Activated CD4-positive, alpha-beta T cell treated with anti-CD3 and anti-CD28 coated beads for 36 hours (primary cell): ENCODE measurements at regions of chr5 and their contacts with region 1.

Region 1: DNA sequence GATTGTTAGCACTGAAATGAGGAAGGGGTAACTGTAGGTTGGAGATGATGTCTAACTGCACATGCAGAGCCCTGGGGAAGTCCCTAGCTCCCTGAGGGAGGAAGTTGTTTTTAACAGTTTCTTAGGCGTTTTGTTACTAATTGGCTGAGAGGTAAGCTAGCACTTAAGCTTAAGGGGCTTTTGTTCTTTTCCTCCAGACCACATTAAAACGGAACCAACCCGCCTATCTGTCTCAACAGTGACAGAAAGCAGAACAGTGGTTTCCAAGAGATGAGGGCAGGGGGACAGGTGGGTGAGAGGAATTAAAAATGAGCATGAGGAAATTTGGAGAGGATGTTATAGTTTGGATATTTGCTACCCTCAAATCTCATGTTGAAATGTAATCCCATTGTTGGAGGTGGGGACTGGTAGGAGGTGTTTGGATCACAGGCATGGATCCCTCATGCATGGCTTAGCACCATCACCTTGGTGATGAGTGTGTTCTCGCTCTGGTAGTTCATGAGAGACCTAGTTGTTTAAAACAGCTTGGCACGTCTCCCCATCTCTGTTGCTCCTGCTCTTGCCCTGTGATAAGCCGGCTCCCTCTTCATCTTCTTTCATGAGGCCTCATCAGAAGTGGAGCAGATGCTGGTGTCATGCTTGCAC is 38.9 kb downstream of the LYRM7 start:
- DNase-seq: peak; percentile 66
- ATAC-seq: peak; percentile 95
- H3K4me3 Mint-ChIP-seq: peak overlapping the region; percentile 70
- H3K27ac Mint-ChIP-seq: peak overlapping the region; percentile 96
- H3K4me1 Mint-ChIP-seq: peaks cover 48% of the 10 kb centered on the region
- H3K27me3 Mint-ChIP-seq: no peaks in the 10 kb centered on the region

Region 2: DNA sequence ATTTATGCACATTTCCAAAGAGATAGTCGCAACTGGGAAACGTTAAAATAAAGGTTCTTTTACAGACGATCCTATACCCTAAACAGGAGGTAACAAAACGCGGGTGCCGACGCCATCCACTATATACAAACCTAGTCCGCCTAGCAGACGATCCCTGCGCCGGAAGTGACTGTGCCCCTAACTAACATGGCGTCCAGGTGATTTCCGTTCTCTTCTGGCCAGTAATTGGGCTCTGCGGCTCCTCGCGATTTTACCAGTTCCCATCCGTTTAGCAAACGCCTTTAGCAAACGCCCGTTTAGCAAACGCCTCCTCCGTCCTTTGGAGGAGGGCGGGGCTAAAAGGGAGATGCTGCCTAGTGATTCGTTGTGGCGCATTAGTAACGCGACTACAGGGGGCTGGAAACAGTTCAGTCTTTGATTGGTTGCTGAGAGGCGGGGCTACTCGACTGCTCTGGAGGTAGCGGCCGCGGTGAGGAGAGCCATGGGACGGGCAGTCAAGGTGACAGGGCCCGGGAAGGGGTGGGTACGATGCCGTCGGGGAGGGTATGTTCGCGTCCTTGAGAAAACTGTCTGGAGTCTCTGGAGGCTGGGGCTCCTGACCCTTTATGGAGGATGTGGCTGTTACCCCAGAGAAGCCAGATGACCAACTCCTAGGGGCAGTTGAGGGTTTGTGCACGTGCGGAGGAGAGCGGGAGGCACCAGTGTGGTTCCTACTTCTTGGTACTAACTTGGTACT is 38.9 kb before region 1 on chr5 and contains the start of gene LYRM7:
- CTCF ChIA-PET with region 1: no interaction called
- POLR2A ChIA-PET with region 1: no interaction called
- intact Hi-C with region 1: loop called (anchors 2 kb)
- DNase-seq: peak; percentile 97
- ATAC-seq: peak; percentile 96
- H3K4me3 Mint-ChIP-seq: peak within 1 kb of the TSS; percentile 95
- H3K27ac Mint-ChIP-seq: peak within 1 kb of the TSS; percentile 93
- H3K4me1 Mint-ChIP-seq: peaks cover 34% of the 10 kb centered on the region
- H3K27me3 Mint-ChIP-seq: no peaks in the 10 kb centered on the region
- total RNA-seq, gene LYRM7: 16.0 to 20.7 TPM

Region 3: GRCh38 chr5:131224387-131225201 is 15.0 kb after region 1 on chr5:
- CTCF ChIA-PET with region 1: interaction called, 5 read pairs
- POLR2A ChIA-PET with region 1: interaction called, 3 read pairs
- intact Hi-C with region 1: loop called in 1 of 2 experiments (anchors 1 kb)
- DNase-seq: peak; percentile 17
- ATAC-seq: peak; percentile 74
- H3K4me3 Mint-ChIP-seq: no peak overlapping the region
- H3K27ac Mint-ChIP-seq: no peak overlapping the region
- H3K4me1 Mint-ChIP-seq: peaks cover 9% of the 10 kb centered on the region
- H3K27me3 Mint-ChIP-seq: no peaks in the 10 kb centered on the region